GM12878 (cell line): ENCODE measurements at regions of chr11 and their contacts with region 1.

Region 1: DNA sequence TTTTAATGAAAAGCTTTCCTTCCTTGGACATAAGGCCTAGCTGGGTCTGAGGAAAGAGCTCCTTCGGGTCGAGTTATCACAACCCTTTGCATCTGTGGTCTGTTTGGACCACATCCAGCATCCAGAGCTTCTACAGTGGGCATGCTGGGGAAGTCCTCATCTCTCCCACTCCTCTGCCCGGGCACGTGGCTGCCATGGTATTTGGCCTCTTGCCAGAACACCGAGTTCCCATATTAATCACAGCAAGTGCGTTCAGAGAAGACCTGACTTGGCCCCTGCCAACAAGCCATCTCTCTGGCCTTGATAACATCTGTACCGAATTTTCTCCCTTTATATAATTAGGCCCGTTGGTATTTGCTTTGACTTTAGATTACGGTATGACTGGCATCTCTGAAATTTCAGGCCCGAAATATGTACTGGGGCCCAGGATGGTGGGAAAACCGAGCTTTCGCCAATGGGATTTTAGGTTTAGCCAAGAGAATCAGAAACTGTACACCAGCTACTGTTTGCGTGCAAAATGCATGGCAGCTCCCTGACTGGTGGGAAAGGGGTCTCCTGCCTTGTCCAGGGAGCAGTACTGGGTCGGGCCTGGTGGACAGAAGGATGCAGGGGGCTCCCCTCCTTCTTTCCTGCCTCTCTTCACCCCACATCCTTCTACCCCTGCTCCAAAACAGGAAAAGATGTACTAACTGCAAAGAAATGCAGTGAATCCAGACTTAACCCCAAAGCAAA is 90.1 kb downstream of the MICAL2 start:
- DNase-seq: no peak
- ATAC-seq: no peak
- H3K4me3 ChIP-seq: no peak overlapping the region
- H3K27ac ChIP-seq: no peak overlapping the region
- H3K4me1 ChIP-seq: peaks cover 23% of the 10 kb centered on the region
- H3K27me3 ChIP-seq: no peaks in the 10 kb centered on the region
- CTCF ChIP-seq: no peak
- EP300 ChIP-seq: no peak
- POLR2A ChIP-seq: no peak
- RAD21 ChIP-seq: no peak

Region 2: DNA sequence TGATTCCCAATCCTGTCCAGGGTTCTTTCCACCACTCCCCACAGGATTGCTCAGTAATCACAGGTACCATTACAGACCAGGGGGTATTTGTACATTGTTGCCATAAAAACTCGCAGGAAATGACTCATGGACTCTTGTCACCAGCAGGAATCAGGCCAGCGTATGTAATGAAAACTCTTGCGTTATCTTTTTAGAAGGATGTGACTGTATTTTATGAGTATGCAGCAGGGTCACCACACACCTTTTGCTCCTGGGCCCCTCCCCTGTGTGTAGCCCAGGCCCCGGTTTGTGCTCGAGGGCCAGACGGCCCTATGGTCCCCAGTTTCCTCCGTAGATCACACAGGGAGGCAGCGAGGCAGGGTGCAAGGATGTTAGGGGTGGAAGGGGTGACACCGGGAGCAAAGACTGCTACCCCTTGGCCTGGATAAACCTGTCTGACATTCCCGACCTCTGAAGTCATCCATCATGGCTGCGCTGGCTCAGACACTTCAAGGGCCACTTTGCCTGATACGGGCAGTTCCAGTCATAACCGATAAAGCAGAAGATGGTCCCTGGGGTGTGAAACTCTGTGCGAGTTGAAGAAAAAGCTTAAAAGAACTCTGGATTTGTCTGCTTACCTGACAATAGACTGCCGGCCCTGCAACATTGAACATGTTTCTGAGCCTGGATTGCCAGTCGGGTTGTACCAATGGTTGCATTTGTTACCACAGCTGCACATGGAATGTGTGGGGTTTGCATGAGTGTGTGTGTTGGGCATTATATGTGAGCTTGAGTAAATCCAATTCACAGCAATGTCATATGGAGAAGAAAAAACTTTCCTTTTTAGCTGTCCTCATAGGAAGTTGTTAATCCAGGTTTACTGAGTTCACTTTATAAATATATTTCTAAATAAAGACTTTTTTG is 33.1 kb before region 1 on chr11:
- CTCF ChIA-PET with region 1: interaction called, 12 read pairs
- POLR2A ChIA-PET with region 1: interaction called, 3 read pairs
- RAD21 ChIA-PET with region 1: interaction called, 10 read pairs
- SMC1A ChIA-PET with region 1: interaction called, 16 read pairs
- in situ Hi-C with region 1: no loop called
- intact Hi-C with region 1: no loop called
- DNase-seq: no peak
- ATAC-seq: no peak
- H3K4me3 ChIP-seq: no peak overlapping the region
- H3K27ac ChIP-seq: no peak overlapping the region
- H3K4me1 ChIP-seq: no peaks in the 10 kb centered on the region
- H3K27me3 ChIP-seq: no peaks in the 10 kb centered on the region
- CTCF ChIP-seq: no peak
- EP300 ChIP-seq: no peak
- POLR2A ChIP-seq: no peak
- RAD21 ChIP-seq: no peak

Region 3: DNA sequence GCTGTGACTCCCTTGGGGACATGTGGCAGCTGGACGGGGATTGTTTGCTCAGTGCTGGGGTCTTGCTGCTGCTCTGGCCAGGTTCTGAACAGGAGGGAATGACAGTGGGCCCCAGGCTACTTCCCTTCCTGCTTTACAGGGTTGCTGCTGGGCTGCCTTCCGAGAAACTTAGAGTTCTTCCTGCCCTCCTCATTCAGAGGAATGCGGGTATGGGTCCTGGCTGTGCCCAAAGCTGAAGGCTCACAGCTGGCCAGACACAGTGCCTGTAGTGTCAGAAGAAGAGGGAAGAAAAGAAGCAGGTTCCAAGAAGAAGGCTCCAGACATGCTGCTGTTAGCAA is 68.6 kb after region 1 on chr11:
- CTCF ChIA-PET with region 1: no interaction called
- POLR2A ChIA-PET with region 1: no interaction called
- RAD21 ChIA-PET with region 1: no interaction called
- SMC1A ChIA-PET with region 1: no interaction called
- in situ Hi-C with region 1: no loop called
- intact Hi-C with region 1: no loop called
- DNase-seq: no peak
- ATAC-seq: no peak
- H3K4me3 ChIP-seq: no peak overlapping the region
- H3K27ac ChIP-seq: no peak overlapping the region
- H3K4me1 ChIP-seq: no peaks in the 10 kb centered on the region
- H3K27me3 ChIP-seq: peaks cover 0 to 1% of the 10 kb centered on the region in 2 experiments; a peak in 3 of 4 replicates
- CTCF ChIP-seq: no peak
- EP300 ChIP-seq: no peak
- POLR2A ChIP-seq: no peak
- RAD21 ChIP-seq: no peak